Transverse colon (tissue), 4 donors: ENCODE measurements at regions of chr13 and their contacts with region 1.

Region 1: DNA sequence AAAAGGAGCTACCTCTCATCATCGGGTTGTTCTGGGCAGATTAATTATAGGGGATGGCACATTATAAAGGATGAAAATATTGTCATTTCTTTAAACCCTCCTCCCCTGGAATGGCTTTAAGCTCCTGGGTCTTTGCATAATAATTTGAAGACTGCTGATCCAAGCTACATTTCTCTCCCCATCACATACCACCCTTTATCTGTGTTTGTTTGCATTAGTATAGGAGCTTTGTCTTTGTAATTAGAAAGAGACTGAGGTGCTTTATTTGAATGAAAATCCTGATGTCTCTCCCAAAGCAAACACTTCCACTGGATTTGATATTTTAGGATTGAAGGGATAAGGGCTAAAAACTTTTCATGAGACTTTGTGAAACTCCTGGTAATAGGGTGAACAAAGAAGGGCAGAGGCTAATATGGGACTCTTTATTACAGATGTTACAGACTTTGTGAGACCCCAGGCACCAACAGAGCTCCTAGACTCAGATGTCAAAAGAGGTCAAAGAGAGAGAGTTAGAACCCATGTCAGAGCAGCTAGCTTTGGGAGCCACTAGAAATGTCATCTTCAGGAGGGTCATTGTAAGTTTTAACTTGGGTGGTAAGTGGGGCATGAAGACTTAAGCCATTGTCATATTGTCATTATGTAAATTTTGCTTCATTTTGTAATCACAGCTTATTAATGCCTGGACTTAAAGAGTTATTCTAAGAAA is 75.3 kb upstream of the RXFP2 start:
- DNase-seq: no peak
- H3K4me3 ChIP-seq: no peak overlapping the region
- H3K27ac ChIP-seq: no peak overlapping the region
- H3K4me1 ChIP-seq: no peaks in the 10 kb centered on the region
- H3K27me3 ChIP-seq: no peaks in the 10 kb centered on the region
- CTCF ChIP-seq: no peak
- EP300 ChIP-seq: no peak
- POLR2A ChIP-seq: no peak

Region 2: DNA sequence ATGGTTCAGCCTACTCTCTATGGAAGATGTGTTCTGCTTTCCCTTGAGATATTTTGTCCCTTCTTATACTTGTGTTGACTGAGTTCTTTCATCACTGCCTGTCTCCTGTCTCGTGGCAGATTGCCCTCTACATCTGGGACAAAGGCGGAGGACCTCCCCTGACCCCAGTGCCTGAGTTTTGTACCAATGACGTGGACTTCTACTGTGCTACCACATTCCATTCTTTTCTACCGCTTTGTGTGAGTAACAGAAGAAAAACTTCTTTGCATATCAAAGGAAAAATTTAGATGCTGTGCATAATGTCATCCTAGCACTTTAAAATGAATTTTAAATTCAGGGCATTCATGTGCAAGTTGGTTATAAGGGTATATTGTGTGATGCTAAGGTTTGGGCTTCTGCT is 389.6 kb before region 1 on chr13:
- in situ Hi-C with region 1: no loop called
- intact Hi-C with region 1: no loop called
- DNase-seq: no peak
- H3K4me3 ChIP-seq: no peak overlapping the region
- H3K27ac ChIP-seq: no peak overlapping the region
- H3K4me1 ChIP-seq: no peaks in the 10 kb centered on the region
- H3K27me3 ChIP-seq: no peaks in the 10 kb centered on the region
- CTCF ChIP-seq: no peak
- EP300 ChIP-seq: no peak
- POLR2A ChIP-seq: no peak

Region 3: DNA sequence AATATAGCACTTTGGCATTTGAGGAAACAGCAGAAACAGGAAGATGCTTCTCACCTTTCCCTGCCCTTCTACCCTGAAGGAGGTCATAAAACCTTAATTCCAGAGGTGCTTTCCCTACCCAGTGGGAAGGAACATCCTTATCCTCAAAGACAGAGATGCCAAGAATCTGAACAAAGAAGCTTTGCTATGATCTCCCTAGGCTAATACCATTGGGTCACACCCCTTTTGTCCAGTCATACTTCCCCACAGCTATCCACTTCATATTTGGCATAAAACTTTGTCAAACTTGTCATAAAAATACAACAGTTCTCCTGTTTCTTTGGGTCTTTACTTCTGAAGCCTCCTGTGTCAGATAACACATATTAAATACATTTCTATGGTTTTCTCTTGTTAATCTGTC is 53.5 kb after region 1 on chr13:
- in situ Hi-C with region 1: no loop called
- intact Hi-C with region 1: no loop called
- DNase-seq: no peak
- H3K4me3 ChIP-seq: no peak overlapping the region
- H3K27ac ChIP-seq: no peak overlapping the region
- H3K4me1 ChIP-seq: no peaks in the 10 kb centered on the region
- H3K27me3 ChIP-seq: no peaks in the 10 kb centered on the region
- CTCF ChIP-seq: no peak
- EP300 ChIP-seq: no peak
- POLR2A ChIP-seq: no peak

Region 4: GRCh38 chr13:32330441-32330840 is 666.4 kb after region 1 on chr13:
- in situ Hi-C with region 1: no loop called
- intact Hi-C with region 1: loop called (anchors 5 kb)
- DNase-seq: no peak
- H3K4me3 ChIP-seq: no peak overlapping the region
- H3K27ac ChIP-seq: no peak overlapping the region
- H3K4me1 ChIP-seq: no peaks in the 10 kb centered on the region
- H3K27me3 ChIP-seq: no peaks in the 10 kb centered on the region
- CTCF ChIP-seq: no peak
- EP300 ChIP-seq: no peak
- POLR2A ChIP-seq: no peak

Region 5: DNA sequence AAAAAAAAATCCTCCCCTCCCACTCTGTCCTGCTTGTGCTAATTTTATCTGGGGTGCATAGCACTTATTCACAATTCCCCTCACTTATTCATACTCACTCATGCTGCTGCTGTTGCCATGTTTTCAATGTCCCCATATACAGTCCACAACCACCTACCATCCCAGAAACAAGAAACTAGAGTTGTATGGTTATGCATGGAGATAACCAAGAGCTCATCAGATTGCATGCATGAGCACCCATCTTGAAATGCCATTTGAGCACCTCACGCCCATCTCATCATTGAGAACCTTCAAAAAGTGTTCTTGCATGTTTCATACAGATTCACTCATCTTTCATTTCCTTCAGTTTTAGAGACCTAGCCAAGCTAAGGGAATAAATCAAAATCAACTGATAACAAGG is 889.7 kb after region 1 on chr13:
- in situ Hi-C with region 1: no loop called
- intact Hi-C with region 1: no loop called
- DNase-seq: no peak
- H3K4me3 ChIP-seq: no peak overlapping the region
- H3K27ac ChIP-seq: no peak overlapping the region
- H3K4me1 ChIP-seq: no peaks in the 10 kb centered on the region
- H3K27me3 ChIP-seq: no peaks in the 10 kb centered on the region
- CTCF ChIP-seq: no peak
- EP300 ChIP-seq: no peak
- POLR2A ChIP-seq: no peak